PC-9 (cell line): ENCODE measurements at regions of chr7 and their contacts with region 1.

Region 1: GRCh38 chr7:6476596-6477299 is 29.0 kb upstream of the DAGLB start:
- DNase-seq: no peak
- H3K4me3 ChIP-seq: no peak overlapping the region
- H3K27ac ChIP-seq: no peak overlapping the region
- H3K4me1 ChIP-seq: 0 out of 2 replicates have a peak, but pooled peaks cover 11% of the 10 kb centered on the region
- H3K27me3 ChIP-seq: no peaks in the 10 kb centered on the region
- CTCF ChIP-seq: no peak

Region 2: GRCh38 chr7:6198689-6199595 is 277.8 kb before region 1 on chr7:
- CTCF ChIA-PET with region 1: no interaction called
- POLR2A ChIA-PET with region 1: no interaction called
- intact Hi-C with region 1: no loop called
- DNase-seq: no peak
- H3K4me3 ChIP-seq: no peak overlapping the region
- H3K27ac ChIP-seq: no peak overlapping the region
- H3K4me1 ChIP-seq: no peaks in the 10 kb centered on the region
- H3K27me3 ChIP-seq: no peaks in the 10 kb centered on the region
- CTCF ChIP-seq: no peak

Region 3: DNA sequence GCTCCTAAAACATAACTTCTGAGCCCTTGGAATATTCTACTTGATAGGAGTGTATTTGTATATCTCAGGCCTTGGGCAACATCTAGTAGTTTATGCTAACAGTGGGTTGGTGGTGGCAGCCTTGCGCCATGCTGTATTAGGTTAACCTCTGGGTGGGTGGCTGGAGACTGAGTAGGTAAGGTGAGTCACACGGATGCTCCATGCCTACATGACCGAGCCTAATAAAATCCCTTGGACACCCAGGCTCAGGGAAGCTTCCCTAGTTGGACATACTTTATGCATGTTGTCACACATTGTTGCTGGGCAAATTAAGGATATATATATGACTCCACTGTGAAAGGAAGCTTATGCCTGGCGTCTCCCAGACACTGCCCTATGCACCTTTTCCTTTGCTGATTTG is 23.0 kb before region 1 on chr7:
- CTCF ChIA-PET with region 1: interaction called, 12 read pairs
- POLR2A ChIA-PET with region 1: no interaction called
- intact Hi-C with region 1: no loop called
- DNase-seq: peak; percentile 29 to 90
- H3K4me3 ChIP-seq: no peak overlapping the region
- H3K27ac ChIP-seq: no peak overlapping the region
- H3K4me1 ChIP-seq: peaks cover 14% of the 10 kb centered on the region
- H3K27me3 ChIP-seq: no peaks in the 10 kb centered on the region
- CTCF ChIP-seq: no peak

Region 4: DNA sequence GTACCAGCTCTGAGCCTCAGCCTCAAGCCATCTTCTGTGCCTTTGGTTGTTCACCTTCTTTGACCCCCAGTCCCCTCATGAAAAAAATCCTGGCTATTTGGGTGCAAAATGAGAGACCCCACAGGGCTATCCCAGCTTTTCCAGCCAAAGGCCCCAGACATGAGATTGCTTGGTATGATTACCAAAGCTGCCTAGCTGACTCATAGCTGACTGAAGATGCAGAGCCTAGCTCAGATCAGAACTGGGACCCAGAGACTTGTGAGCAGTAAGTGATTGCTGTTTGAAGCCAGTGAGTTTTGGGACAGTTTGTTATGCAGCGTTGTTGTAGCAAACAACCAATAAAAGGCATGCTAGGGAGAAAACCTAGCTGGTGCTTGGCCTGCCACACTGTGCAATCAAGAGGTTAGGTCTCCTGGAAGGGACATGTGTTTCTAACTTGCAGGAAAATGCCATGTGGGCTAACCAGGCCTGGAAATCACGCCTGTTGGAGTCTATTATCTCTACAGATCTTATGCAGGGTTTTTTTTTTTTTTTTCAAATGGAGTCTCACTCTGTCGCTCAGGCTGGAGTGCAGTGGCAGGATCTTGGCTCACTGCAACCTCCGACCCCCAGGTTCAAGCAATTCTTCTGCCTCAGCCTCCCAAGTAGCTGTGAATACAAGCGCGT is 19.0 kb after region 1 on chr7:
- CTCF ChIA-PET with region 1: no interaction called
- POLR2A ChIA-PET with region 1: no interaction called
- intact Hi-C with region 1: no loop called
- DNase-seq: no peak
- H3K4me3 ChIP-seq: no peak overlapping the region
- H3K27ac ChIP-seq: no peak overlapping the region
- H3K4me1 ChIP-seq: no peaks in the 10 kb centered on the region
- H3K27me3 ChIP-seq: no peaks in the 10 kb centered on the region
- CTCF ChIP-seq: no peak

Region 5: DNA sequence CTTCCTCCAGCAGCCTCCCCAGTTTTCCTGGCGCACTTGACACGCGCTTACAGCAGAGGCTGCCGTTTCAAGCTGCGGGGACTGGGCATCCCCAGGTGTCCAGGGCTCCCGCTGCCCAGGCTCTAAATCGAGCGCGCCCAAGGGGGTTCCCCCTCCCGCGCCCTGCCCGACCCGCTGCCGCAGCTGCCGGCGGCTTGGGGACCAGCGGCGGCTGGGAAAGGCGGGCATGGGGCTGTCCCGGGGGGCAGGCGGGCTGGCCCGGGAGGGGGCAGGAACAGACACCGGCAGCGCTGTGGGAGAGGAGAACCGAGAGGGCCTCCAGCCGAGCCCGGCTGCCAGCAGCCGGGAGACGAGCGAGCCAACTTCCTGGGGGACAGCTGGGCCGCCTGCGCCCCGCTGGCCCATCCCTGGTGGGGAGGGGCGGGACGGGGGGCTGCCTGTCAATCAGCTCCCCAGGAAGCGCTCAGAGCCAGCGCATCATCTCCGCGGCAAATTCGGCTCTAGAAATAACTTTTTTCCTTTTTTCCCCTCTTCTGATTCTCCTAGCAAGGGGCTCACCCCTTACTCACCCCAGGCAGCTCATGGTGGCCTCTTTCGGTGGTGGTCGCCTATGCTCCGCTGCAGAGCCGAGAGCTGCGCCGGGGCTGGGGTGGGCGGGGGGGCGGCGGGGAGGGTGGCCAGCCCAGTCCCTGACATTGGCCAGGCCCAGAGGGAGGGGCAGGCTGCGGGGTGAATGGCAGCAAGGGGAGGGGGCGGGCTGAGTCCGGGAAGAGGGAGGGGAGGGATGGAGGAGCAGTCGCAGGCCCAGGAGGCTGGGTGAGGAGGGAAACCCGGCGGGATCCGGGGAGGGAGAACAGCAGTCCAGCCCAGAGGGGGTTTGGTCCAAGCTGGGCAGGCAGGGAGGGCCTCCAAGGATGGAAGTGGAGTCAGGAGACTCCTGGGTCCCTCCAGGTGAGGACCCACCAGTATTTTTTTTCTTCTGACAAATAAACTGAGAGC is 59.8 kb after region 1 on chr7:
- CTCF ChIA-PET with region 1: no interaction called
- POLR2A ChIA-PET with region 1: interaction called, 18 read pairs
- intact Hi-C with region 1: no loop called
- DNase-seq: peak in 1 of 2 experiments; percentile 26
- H3K4me3 ChIP-seq: no peak overlapping the region
- H3K27ac ChIP-seq: no peak overlapping the region
- H3K4me1 ChIP-seq: no peaks in the 10 kb centered on the region
- H3K27me3 ChIP-seq: no peaks in the 10 kb centered on the region
- CTCF ChIP-seq: no peak